Dorsolateral prefrontal cortex (tissue), 120 donors: ENCODE measurements at regions of chr6 and their contacts with region 1.

Region 1: DNA sequence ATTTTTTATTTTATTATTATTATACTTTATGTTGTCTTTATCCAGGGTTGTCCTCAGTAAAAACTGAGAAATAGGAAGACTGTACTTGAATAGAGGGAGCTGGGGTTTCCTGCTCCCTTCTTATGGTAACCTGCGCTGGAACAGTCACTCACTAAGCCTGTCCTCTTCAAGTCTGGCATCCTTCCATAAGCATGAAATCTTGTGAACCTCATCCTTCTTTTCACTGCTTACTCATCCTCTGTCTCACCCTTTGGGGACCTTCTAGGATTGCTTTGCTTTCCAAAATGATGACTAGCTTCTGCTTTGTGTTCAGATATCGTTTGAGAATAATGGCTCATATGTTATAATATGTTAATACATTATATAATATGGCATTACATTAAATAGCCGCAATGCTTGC is 90.6 kb downstream of the C6orf118 start:
- DNase-seq: no peak
- H3K4me3 ChIP-seq: no peak overlapping the region
- H3K27ac ChIP-seq: no peak overlapping the region
- H3K27me3 ChIP-seq: no peaks in the 10 kb centered on the region
- CTCF ChIP-seq: no peak

Region 2: GRCh38 chr6:163338671-163339405 is 1880.0 kb before region 1 on chr6:
- intact Hi-C with region 1: no loop called
- DNase-seq: peak in 8 of 10 donors; percentile 74 to 91 (median 84)
- H3K4me3 ChIP-seq: peak overlapping the region in 15 of 59 donors; percentile 0 to 37 (median 9)
- H3K27ac ChIP-seq: peak overlapping the region; percentile 72 to 100 (median 97)
- H3K27me3 ChIP-seq: no peaks in the 10 kb centered on the region
- CTCF ChIP-seq: peak in 5 of 56 donors; percentile 11 to 35 (median 20)

Region 3: DNA sequence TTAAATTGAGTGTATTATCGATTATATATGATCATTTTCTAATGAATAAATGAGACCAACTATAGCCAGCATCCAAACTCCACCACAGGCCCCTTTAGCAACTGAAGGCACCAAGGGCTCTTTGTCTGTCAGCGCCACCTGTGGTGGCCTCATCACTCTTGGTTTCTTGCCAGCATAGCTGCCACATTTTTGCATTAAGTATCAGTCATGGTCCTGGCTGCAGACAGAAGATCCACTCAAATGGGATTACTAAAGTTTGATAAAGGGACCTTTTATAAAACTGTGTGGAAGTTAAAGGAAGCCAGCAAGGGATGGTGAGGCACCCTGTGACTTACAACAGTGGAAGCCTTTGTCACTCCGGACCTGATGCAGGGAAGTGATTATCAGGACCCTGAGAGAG is 72.4 kb before region 1 on chr6:
- intact Hi-C with region 1: loop called in 1 of 2 experiments (anchors 10 kb)
- DNase-seq: peak in 5 of 10 donors; percentile 11 to 54 (median 32)
- H3K4me3 ChIP-seq: no peak overlapping the region
- H3K27ac ChIP-seq: peak overlapping the region in 28 of 59 donors; percentile 1 to 76 (median 43)
- H3K27me3 ChIP-seq: no peaks in the 10 kb centered on the region
- CTCF ChIP-seq: peak in 15 of 56 donors; percentile 11 to 41 (median 21)

Region 4: DNA sequence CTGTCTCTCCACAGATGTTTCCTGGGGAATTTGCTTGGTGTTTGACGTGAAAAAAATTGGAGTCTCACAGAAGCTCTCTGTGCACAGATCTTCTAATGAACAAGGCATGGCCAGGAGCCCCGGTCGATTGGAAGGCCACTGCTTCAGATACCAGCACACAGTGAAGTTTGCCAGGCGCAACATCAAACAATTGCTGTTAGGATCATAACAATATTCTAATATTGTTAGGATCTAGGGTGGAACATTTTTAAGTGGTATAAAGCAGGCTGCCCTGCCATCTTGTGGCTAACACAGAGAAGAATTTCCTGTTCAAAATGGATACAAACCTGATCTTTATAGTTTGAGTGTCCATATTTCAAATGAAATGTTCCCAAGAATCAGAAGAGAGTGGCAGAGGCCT is 26.5 kb after region 1 on chr6:
- intact Hi-C with region 1: no loop called
- DNase-seq: peak in 5 of 10 donors; percentile 15 to 42 (median 35)
- H3K4me3 ChIP-seq: peak overlapping the region in 53 of 59 donors; percentile 1 to 59 (median 31)
- H3K27ac ChIP-seq: peak overlapping the region in 25 of 59 donors; percentile 1 to 81 (median 30)
- H3K27me3 ChIP-seq: no peaks in the 10 kb centered on the region
- CTCF ChIP-seq: peak in 55 of 56 donors; percentile 43 to 76 (median 63)